GM12878 (cell line): ENCODE measurements at regions of chr11 and their contacts with region 1.

Region 1: DNA sequence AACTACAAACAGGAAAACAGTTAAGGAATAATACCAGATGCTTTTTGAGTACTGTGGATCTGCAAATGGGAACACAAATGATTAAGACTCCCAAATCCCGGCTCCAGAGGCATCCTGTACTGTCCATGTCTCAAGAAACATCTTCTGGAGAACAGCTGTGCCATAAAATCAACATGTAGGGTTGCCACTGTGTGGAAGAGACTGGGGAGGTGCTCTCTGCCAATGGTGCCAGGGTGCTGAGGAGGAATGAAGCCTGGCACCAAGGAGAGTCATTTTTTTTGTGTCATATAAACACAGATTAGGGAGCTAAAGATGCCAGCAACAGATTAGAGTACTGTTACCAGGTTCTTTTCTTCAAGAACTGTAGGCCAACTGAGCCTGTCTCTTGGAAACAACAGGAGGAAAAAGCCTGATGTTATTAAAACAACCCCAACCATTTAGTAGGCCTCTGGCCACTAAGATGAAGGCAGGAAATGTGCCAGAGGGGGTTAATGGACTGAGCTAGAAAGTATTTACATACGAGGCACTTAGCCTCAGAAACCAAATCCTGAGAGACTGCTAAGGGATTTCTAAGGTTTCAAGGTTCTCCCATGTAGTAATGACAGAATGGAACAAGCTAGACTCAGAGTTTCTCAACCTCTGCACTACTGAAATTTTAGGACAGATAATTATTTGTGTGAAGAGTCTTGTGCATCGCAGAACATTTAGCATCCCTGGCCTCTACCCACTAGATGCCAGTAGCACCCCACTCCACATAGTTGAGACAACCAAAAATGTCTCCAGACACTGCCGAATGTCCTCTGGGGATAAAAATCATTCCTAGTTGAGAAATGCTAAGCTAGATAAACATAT is 54.6 kb upstream of the CHRM4 start:
- DNase-seq: no peak
- ATAC-seq: peak; percentile 54; the same call in 2 of the 3 replicates
- H3K4me3 ChIP-seq: no peak overlapping the region
- H3K27ac ChIP-seq: no peak overlapping the region
- H3K4me1 ChIP-seq: no peaks in the 10 kb centered on the region
- H3K27me3 ChIP-seq: no peaks in the 10 kb centered on the region
- CTCF ChIP-seq: peak; percentile 17 to 47 (median 41); a peak in 4 of 6 replicates
- EP300 ChIP-seq: no peak
- POLR2A ChIP-seq: no peak
- RAD21 ChIP-seq: peak; percentile 50

Region 2: DNA sequence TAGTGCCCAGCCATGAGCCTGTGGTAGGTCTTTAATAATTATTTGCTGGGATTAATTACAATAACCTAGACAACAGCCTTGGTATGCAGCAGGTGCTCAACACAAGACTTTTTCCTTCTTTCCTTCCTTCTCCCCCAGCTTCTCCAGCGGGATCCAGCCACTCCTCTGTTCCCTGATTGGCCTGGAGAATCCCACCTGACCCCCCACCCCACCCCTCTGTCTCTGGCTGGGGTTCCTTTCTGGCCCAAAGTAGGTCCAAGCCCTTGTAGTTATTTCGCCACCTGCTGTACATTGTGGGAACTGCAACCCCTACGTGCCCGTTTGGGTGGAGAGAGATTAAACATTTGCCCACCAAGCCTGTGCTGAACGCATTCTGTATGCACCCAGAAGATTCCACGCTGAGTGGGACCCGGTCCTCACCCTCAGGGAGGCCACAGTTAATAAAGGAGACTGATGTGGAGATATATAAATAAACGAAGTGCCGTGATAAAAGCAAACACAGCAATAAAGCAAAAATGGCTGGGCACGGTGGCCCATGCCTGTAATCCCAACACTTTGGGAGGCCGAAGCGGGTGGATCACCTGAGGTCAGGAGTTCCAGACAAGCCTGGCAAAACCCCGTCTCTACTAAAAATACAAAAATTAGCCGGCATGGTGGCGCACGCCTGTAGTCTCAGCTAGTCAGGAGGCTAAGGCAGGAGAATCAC is 131.0 kb before region 1 on chr11:
- CTCF ChIA-PET with region 1: no interaction called
- POLR2A ChIA-PET with region 1: no interaction called
- RAD21 ChIA-PET with region 1: no interaction called
- SMC1A ChIA-PET with region 1: no interaction called
- in situ Hi-C with region 1: no loop called
- intact Hi-C with region 1: no loop called
- DNase-seq: no peak
- ATAC-seq: peak; percentile 86
- H3K4me3 ChIP-seq: no peak overlapping the region
- H3K27ac ChIP-seq: no peak overlapping the region
- H3K4me1 ChIP-seq: peaks cover 9% of the 10 kb centered on the region
- H3K27me3 ChIP-seq: no peaks in the 10 kb centered on the region
- CTCF ChIP-seq: peak; percentile 80 to 97 (median 97)
- EP300 ChIP-seq: no peak
- POLR2A ChIP-seq: no peak
- RAD21 ChIP-seq: peak; percentile 78

Region 3: GRCh38 chr11:46457659-46458424 is 11.7 kb after region 1 on chr11:
- CTCF ChIA-PET with region 1: interaction called, 12 read pairs
- POLR2A ChIA-PET with region 1: interaction called, 3 read pairs
- RAD21 ChIA-PET with region 1: interaction called, 3 read pairs
- SMC1A ChIA-PET with region 1: interaction called, 18 read pairs
- in situ Hi-C with region 1: no loop called
- intact Hi-C with region 1: no loop called
- DNase-seq: no peak
- ATAC-seq: no peak
- H3K4me3 ChIP-seq: no peak overlapping the region
- H3K27ac ChIP-seq: no peak overlapping the region
- H3K4me1 ChIP-seq: no peaks in the 10 kb centered on the region
- H3K27me3 ChIP-seq: no peaks in the 10 kb centered on the region
- CTCF ChIP-seq: no peak
- EP300 ChIP-seq: no peak
- POLR2A ChIP-seq: no peak
- RAD21 ChIP-seq: no peak

Region 4: GRCh38 chr11:46475926-46476545 is 29.9 kb after region 1 on chr11:
- CTCF ChIA-PET with region 1: interaction called, 30 read pairs
- POLR2A ChIA-PET with region 1: interaction called, 26 read pairs
- RAD21 ChIA-PET with region 1: interaction called, 28 read pairs
- SMC1A ChIA-PET with region 1: interaction called, 171 read pairs
- in situ Hi-C with region 1: no loop called
- intact Hi-C with region 1: loop called (anchors 5 kb)
- DNase-seq: peak; percentile 28
- ATAC-seq: peak; percentile 73
- H3K4me3 ChIP-seq: no peak overlapping the region
- H3K27ac ChIP-seq: no peak overlapping the region
- H3K4me1 ChIP-seq: peaks cover 15% of the 10 kb centered on the region
- H3K27me3 ChIP-seq: no peaks in the 10 kb centered on the region
- CTCF ChIP-seq: no peak
- EP300 ChIP-seq: no peak
- POLR2A ChIP-seq: no peak
- RAD21 ChIP-seq: no peak

Region 5: GRCh38 chr11:46484101-46484500 is 38.0 kb after region 1 on chr11:
- CTCF ChIA-PET with region 1: interaction called, 39 read pairs
- POLR2A ChIA-PET with region 1: interaction called, 23 read pairs
- RAD21 ChIA-PET with region 1: interaction called, 25 read pairs
- SMC1A ChIA-PET with region 1: interaction called, 171 read pairs
- in situ Hi-C with region 1: no loop called
- intact Hi-C with region 1: loop called (anchors 5 kb)
- DNase-seq: no peak
- ATAC-seq: no peak
- H3K4me3 ChIP-seq: no peak overlapping the region
- H3K27ac ChIP-seq: peak overlapping the region; percentile 41
- H3K4me1 ChIP-seq: peaks cover 3% of the 10 kb centered on the region
- H3K27me3 ChIP-seq: no peaks in the 10 kb centered on the region
- CTCF ChIP-seq: no peak
- EP300 ChIP-seq: no peak
- POLR2A ChIP-seq: no peak
- RAD21 ChIP-seq: no peak

Region 6: GRCh38 chr11:46521961-46522681 is 76.0 kb after region 1 on chr11:
- CTCF ChIA-PET with region 1: interaction called, 13 read pairs
- POLR2A ChIA-PET with region 1: no interaction called
- RAD21 ChIA-PET with region 1: interaction called, 10 read pairs
- SMC1A ChIA-PET with region 1: interaction called, 8 read pairs
- in situ Hi-C with region 1: no loop called
- intact Hi-C with region 1: no loop called
- DNase-seq: no peak
- ATAC-seq: peak; percentile 77
- H3K4me3 ChIP-seq: no peak overlapping the region
- H3K27ac ChIP-seq: peak overlapping the region; percentile 50
- H3K4me1 ChIP-seq: peaks cover 14% of the 10 kb centered on the region
- H3K27me3 ChIP-seq: no peaks in the 10 kb centered on the region
- CTCF ChIP-seq: peak; percentile 26 to 46 (median 29); a peak in 4 of 6 replicates
- EP300 ChIP-seq: no peak
- POLR2A ChIP-seq: no peak
- RAD21 ChIP-seq: peak; percentile 58

Region 7: GRCh38 chr11:46537537-46538295 is 91.6 kb after region 1 on chr11:
- CTCF ChIA-PET with region 1: interaction called, 4 read pairs
- POLR2A ChIA-PET with region 1: no interaction called
- RAD21 ChIA-PET with region 1: interaction called, 4 read pairs
- SMC1A ChIA-PET with region 1: interaction called, 11 read pairs
- in situ Hi-C with region 1: no loop called
- intact Hi-C with region 1: no loop called
- DNase-seq: no peak
- ATAC-seq: peak; percentile 99
- H3K4me3 ChIP-seq: no peak overlapping the region
- H3K27ac ChIP-seq: no peak overlapping the region
- H3K4me1 ChIP-seq: no peaks in the 10 kb centered on the region
- H3K27me3 ChIP-seq: no peaks in the 10 kb centered on the region
- CTCF ChIP-seq: peak; percentile 90 to 95 (median 93); a peak in 5 of 6 replicates
- EP300 ChIP-seq: no peak
- POLR2A ChIP-seq: no peak
- RAD21 ChIP-seq: peak; percentile 95

Region 8: GRCh38 chr11:46876471-46876870 is 430.3 kb after region 1 on chr11:
- CTCF ChIA-PET with region 1: no interaction called
- POLR2A ChIA-PET with region 1: no interaction called
- RAD21 ChIA-PET with region 1: no interaction called
- SMC1A ChIA-PET with region 1: no interaction called
- in situ Hi-C with region 1: no loop called
- intact Hi-C with region 1: no loop called
- DNase-seq: no peak
- ATAC-seq: no peak
- H3K4me3 ChIP-seq: no peak overlapping the region
- H3K27ac ChIP-seq: no peak overlapping the region
- H3K4me1 ChIP-seq: no peaks in the 10 kb centered on the region
- H3K27me3 ChIP-seq: peaks cover 0 to 2% of the 10 kb centered on the region in 2 experiments; a peak in 2 of 4 replicates
- CTCF ChIP-seq: no peak
- EP300 ChIP-seq: no peak
- POLR2A ChIP-seq: no peak
- RAD21 ChIP-seq: no peak